ENCODE measurements at regions of chr2 and their contacts with region 1.

Region 1: GRCh38 chr2:41782306-41783158 is 265.3 kb upstream of the PKDCC start:
- DNase-seq: no peak
- ATAC-seq: peak in 1 of 4 donors; percentile 57
- H3K4me3 ChIP-seq: no peak overlapping the region
- H3K27ac ChIP-seq: no peak overlapping the region
- H3K4me1 ChIP-seq: no peaks in the 10 kb centered on the region
- H3K27me3 ChIP-seq: no peaks in the 10 kb centered on the region
- CTCF ChIP-seq: peak; percentile 84

Region 2: DNA sequence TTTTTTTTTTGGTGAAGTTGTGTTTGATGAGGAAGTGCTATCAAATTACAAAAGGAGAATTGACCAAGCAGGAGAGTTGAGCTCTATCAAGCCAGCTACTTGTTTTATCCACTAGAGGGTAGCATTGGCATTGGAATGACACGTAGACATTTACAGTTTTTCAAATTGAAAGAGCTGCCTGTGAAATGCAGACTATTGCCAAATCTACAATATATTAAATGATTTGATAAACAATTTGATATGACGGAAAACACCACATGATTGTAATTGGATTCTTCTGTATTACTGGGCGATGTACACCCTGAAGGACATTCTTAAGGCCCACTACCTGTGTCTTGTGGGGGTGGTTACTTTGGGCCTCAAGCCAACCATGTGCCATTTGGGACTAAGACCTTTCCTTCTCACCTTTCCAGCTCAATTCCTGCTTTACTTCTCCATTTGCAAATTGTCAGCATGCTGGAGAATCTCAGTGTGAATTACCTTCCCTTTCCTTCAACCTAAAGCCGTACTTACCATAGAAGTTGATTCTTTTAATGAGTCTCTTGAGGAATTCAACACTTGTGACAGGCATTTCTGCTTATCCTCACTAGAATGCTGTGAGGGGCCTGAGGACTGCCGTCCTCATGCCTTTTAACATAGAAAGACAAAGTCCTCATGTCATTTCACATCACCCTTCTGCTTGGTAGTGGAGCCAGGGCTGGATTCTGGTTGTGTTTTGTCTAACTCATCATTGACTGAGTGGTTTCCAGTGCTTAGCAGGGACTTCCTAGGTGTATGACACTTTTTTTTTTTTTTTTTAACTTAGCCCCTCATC is 1868.7 kb before region 1 on chr2:
- intact Hi-C with region 1: loop called (anchors 5 to 10 kb)
- DNase-seq: no peak
- ATAC-seq: peak in 3 of 4 donors; percentile 46 to 77 (median 65)
- H3K4me3 ChIP-seq: no peak overlapping the region
- H3K27ac ChIP-seq: no peak overlapping the region
- H3K4me1 ChIP-seq: no peaks in the 10 kb centered on the region
- H3K27me3 ChIP-seq: peaks cover 0 to 3% (median 0%) of the 10 kb centered on the region in 3 donors
- CTCF ChIP-seq: peak; percentile 83

Region 3: GRCh38 chr2:41414486-41415230 is 367.9 kb before region 1 on chr2:
- intact Hi-C with region 1: loop called in 1 of 2 experiments (anchors 5 kb)
- DNase-seq: no peak
- ATAC-seq: no peak
- H3K4me3 ChIP-seq: no peak overlapping the region
- H3K27ac ChIP-seq: no peak overlapping the region
- H3K4me1 ChIP-seq: no peaks in the 10 kb centered on the region
- H3K27me3 ChIP-seq: no peaks in the 10 kb centered on the region
- CTCF ChIP-seq: peak; percentile 20